ENCODE measurements at regions of chr11 and their contacts with region 1.

Region 1: GRCh38 chr11:76680518-76681425 is 10.2 kb upstream of the LRRC32 start:
- DNase-seq: peak; percentile 76 to 84 (median 78)
- ATAC-seq: peak; percentile 60 to 89 (median 81)
- H3K4me3 ChIP-seq: peak overlapping the region in 1 of 12 donors; percentile 0
- H3K27ac ChIP-seq: peak overlapping the region in 1 of 12 donors; percentile 20
- H3K4me1 ChIP-seq: peaks cover 0 to 17% (median 5%) of the 10 kb centered on the region in 12 donors
- H3K27me3 ChIP-seq: no peaks in the 10 kb centered on the region
- CTCF ChIP-seq: peak; percentile 79 to 95 (median 86)
- POLR2A ChIP-seq: no peak

Region 2: DNA sequence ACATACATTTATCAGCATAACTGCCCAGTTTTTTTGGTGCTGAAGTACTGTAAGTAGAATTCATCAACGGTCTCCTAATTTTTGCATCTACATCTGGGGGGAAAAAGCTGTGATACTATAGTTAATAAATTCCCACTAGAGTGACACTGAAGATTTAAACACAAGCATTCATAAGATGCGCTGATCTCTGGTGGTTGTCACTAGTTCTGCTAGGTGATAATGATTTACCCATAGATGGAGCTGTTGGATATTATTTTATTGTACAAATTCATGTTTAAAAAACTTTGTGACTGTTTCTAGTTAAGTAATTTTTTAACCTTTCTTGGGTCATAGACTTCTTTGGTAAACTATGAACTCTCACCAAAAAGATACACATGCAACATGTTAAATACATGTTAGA is 129.4 kb before region 1 on chr11:
- intact Hi-C with region 1: loop called (anchors 1 to 5 kb)
- DNase-seq: no peak
- ATAC-seq: no peak
- H3K4me3 ChIP-seq: no peak overlapping the region
- H3K27ac ChIP-seq: no peak overlapping the region
- H3K4me1 ChIP-seq: peaks cover 0 to 8% (median 0%) of the 10 kb centered on the region in 12 donors
- H3K27me3 ChIP-seq: no peaks in the 10 kb centered on the region
- CTCF ChIP-seq: peak in 11 of 12 donors; percentile 14 to 58 (median 44)
- POLR2A ChIP-seq: no peak

Region 3: GRCh38 chr11:76598426-76598839 is 82.3 kb before region 1 on chr11:
- intact Hi-C with region 1: loop called (anchors 1 to 5 kb)
- DNase-seq: peak in 1 of 5 donors; percentile 59
- ATAC-seq: peak; percentile 58 to 69 (median 61)
- H3K4me3 ChIP-seq: no peak overlapping the region
- H3K27ac ChIP-seq: peak overlapping the region in 5 of 12 donors; percentile 1 to 25 (median 6)
- H3K4me1 ChIP-seq: peaks cover 0 to 31% (median 17%) of the 10 kb centered on the region in 12 donors
- H3K27me3 ChIP-seq: no peaks in the 10 kb centered on the region
- CTCF ChIP-seq: peak; percentile 43 to 74 (median 58)
- POLR2A ChIP-seq: no peak

Region 4: GRCh38 chr11:76626921-76627401 is 53.8 kb before region 1 on chr11:
- intact Hi-C with region 1: no loop called
- DNase-seq: no peak
- ATAC-seq: no peak
- H3K4me3 ChIP-seq: no peak overlapping the region
- H3K27ac ChIP-seq: peak overlapping the region in 1 of 12 donors; percentile 46
- H3K4me1 ChIP-seq: peaks cover 0 to 48% (median 22%) of the 10 kb centered on the region in 12 donors
- H3K27me3 ChIP-seq: no peaks in the 10 kb centered on the region
- CTCF ChIP-seq: no peak
- POLR2A ChIP-seq: no peak

Measured in heart left ventricle (tissue), 16 donors.